Motor neuron (in vitro differentiated cells): ENCODE measurements at regions of chr6 and their contacts with region 1.

Region 1: GRCh38 chr6:49409951-49410542 is 53.0 kb downstream of the MMUT start:
- ATAC-seq: peak; percentile 77 to 85 (median 82)
- H3K4me3 ChIP-seq: no peak overlapping the region
- H3K27ac ChIP-seq: no peak overlapping the region
- H3K4me1 ChIP-seq: peaks cover 0 to 6% of the 10 kb centered on the region in 2 donors

Region 2: GRCh38 chr6:47631269-47631772 is 1778.7 kb before region 1 on chr6:
- in situ Hi-C with region 1: loop called in 1 of 9 experiments (anchors 25 kb)
- ATAC-seq: peak in 3 of 8 experiments; percentile 5 to 9 (median 7)
- H3K4me3 ChIP-seq: no peak overlapping the region
- H3K27ac ChIP-seq: no peak overlapping the region
- H3K4me1 ChIP-seq: no peaks in the 10 kb centered on the region

Region 3: GRCh38 chr6:47787620-47788497 is 1622.2 kb before region 1 on chr6:
- in situ Hi-C with region 1: loop called in 6 of 9 experiments (anchors 25 kb)
- ATAC-seq: peak; percentile 81 to 95 (median 86)
- H3K4me3 ChIP-seq: no peak overlapping the region
- H3K27ac ChIP-seq: no peak overlapping the region
- H3K4me1 ChIP-seq: peaks cover 0 to 2% of the 10 kb centered on the region in 2 donors

Region 4: DNA sequence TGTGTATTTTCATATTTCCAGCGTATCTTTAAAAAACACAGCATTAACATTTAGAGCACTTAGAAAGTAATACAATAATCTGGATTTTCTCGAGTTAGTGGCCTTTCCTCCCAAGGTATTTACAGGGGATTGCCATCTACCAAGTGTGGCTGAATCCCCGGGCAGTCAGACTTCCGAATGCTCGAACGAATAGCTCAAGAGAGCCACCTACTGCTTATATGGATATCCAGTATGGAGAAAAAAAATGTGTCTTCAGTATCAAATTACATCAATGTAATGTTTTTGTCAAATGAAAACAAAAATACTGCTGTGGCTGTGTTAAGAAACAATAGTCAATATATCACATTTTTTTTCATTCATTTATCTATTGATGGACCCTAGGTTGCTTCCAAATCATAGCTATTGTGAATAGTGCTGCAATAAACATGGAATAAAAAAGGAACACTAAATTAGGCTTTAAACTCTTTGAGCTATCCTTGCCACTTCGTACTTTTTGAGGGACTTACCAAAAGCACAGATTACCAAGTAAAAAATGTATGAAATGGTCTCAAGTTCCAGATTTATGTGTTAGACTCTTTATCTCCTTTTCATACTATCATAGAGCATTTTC is 644.6 kb before region 1 on chr6:
- in situ Hi-C with region 1: loop called in 2 of 9 experiments (anchors 25 kb)
- ATAC-seq: peak; percentile 52 to 90 (median 73)
- H3K4me3 ChIP-seq: no peak overlapping the region
- H3K27ac ChIP-seq: no peak overlapping the region
- H3K4me1 ChIP-seq: no peaks in the 10 kb centered on the region

Region 5: DNA sequence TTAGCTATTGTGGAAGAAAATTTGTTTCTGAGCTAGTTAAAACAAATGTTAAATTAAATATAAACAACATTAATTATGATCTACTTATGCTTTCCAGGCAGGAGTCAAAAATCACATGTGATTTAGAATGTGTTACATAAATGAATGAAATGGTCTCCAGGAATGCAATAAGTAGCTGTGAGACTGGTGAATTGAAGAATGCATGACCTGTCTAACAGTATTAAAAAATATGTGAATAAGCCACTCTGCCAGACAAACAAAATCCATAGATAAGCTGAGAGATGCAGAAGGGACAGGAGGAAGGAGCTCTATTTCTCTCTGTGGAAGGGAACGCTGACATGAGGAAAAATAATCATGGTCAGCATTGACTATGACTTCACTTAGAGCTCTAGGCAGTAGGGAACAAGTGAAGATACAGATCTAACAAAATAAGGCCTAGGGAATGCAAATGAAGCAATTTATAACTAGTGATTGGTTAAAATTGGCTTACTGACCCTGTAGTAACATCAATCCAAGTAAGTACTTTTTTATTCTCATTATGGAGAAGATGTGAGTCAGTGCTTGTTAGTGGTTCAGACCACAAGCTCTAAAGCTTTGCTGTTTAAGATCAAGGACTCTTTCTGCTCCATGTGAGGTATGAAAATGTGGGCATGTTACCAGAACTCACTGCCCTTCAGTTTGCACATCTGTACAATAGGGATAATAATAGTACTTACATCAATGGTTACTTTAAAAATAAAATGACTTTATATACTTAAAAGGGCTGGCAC is 379.6 kb before region 1 on chr6:
- in situ Hi-C with region 1: loop called in 1 of 9 experiments (anchors 25 kb)
- ATAC-seq: peak; percentile 27 to 87 (median 64)
- H3K4me3 ChIP-seq: no peak overlapping the region
- H3K27ac ChIP-seq: no peak overlapping the region
- H3K4me1 ChIP-seq: peaks cover 0 to 8% of the 10 kb centered on the region in 2 donors

Region 6: GRCh38 chr6:49202924-49203536 is 207.0 kb before region 1 on chr6:
- in situ Hi-C with region 1: loop called in 1 of 9 experiments (anchors 25 kb)
- ATAC-seq: peak in 3 of 8 experiments; percentile 18 to 97 (median 92)
- H3K4me3 ChIP-seq: no peak overlapping the region
- H3K27ac ChIP-seq: no peak overlapping the region
- H3K4me1 ChIP-seq: no peaks in the 10 kb centered on the region

Region 7: DNA sequence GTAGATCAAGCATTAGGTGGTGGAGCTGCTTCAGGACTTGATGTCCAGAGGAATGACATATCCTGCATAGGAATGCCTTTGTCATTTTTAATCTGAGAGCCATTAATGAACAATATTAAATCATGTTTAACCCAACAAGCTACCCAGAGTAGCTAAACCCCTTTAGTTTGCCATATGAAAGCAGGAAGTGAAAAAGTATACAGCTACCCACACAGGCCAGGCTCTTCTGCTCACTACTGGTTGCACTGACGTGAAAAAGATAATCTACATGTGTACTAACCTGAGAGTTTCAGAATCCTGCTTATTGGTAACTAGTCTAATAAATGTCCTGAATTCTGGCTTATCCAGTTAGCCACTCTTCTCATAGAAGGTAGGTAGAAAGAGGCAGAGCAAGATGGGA is 109.6 kb after region 1 on chr6:
- in situ Hi-C with region 1: loop called in 1 of 9 experiments (anchors 25 kb)
- ATAC-seq: no peak
- H3K4me3 ChIP-seq: no peak overlapping the region
- H3K27ac ChIP-seq: no peak overlapping the region
- H3K4me1 ChIP-seq: no peaks in the 10 kb centered on the region

Region 8: DNA sequence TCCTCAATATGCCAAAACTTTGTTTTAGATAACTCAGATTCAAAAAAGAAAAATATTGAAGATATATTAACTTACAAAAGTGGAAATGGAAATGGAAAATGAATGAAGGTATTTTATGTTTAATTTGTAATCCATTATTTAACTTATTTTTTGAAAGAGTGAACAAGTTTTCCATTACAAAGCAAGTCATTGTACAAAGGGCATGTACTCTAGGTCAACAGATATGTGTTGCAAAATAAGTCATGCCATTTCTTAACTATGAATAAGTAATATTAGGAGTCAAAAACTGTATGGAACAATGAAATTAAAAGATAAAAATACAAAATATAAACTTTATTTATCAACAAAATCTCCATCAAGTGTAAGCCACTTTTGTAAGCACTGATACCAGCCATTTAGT is 585.2 kb after region 1 on chr6:
- in situ Hi-C with region 1: no loop called
- ATAC-seq: no peak
- H3K4me3 ChIP-seq: no peak overlapping the region
- H3K27ac ChIP-seq: no peak overlapping the region
- H3K4me1 ChIP-seq: no peaks in the 10 kb centered on the region